ENCODE measurements at regions of chr10 and their contacts with region 1.

Region 1: DNA sequence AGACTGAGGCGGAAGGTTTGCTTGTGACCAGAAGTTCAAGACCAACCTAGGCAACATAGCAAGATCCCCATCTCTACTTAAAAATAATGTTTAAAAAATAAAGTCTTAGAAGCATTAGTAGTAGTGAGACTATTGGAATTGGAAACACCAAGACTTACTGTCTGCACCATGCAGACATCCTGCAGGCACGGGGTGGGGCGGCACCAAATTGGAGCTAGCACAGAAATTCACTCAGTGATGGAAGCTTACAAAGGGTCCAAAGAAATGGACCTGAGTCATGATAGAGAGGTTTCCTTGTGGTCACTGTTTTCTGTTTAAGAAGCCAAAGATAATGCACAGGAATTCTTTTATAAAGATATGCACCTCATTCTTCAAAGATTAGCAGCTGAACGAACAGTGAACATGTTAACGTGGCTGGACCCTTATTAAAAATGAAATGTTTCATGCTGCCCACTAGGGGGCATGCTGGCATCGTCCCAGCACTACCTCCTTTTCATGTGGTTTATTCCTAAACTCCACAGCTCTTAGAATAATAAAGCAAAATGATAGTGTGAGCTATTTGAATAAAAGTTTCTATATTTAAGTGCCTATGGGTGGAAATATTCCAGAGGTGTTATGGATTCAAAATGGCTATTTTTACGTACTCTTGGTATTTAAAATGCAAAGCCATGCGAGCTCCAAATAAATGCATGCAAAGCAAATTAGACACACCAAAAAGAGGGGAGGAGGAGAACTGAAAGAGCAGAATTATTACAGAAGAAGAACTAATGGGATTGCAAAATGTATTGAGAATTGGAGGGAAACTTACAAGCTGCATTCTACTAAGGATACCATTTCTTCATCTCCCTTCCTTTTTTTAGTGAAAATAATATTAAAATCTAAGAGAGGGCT is 28.6 kb downstream of the PDSS1 start:
- DNase-seq: peak; percentile 70 to 82 (median 75)
- H3K4me3 ChIP-seq: no peak overlapping the region
- H3K27ac ChIP-seq: no peak overlapping the region
- H3K4me1 ChIP-seq: no peaks in the 10 kb centered on the region
- H3K27me3 ChIP-seq: no peaks in the 10 kb centered on the region

Region 2: GRCh38 chr10:26642896-26643653 is 83.0 kb before region 1 on chr10:
- CTCF ChIA-PET with region 1: no interaction called
- POLR2A ChIA-PET with region 1: no interaction called
- DNase-seq: peak in 1 of 3 donors; percentile 11
- H3K4me3 ChIP-seq: no peak overlapping the region
- H3K27ac ChIP-seq: no peak overlapping the region
- H3K4me1 ChIP-seq: peaks cover 0 to 3% (median 0%) of the 10 kb centered on the region in 4 experiments
- H3K27me3 ChIP-seq: no peaks in the 10 kb centered on the region

Region 3: DNA sequence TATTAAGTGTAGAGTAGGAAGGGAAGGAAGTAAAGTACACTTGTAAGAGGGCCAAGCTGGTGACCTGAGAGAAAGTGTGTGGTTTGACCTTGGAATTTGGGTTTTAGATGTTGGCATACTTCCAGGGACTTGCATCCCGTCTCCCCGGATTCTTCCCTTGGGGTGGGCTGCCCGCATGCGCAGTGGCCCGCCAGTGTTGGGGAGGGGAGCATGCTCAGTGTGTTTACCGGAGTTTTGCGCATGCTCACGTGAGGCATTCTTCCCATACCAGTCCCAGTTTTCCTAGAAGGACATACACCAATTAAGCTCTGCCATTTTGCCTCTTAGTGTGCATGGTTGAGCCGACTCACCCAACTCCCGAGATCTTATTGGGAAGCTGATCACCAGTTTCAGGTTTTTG is 19.1 kb before region 1 on chr10:
- CTCF ChIA-PET with region 1: interaction called, 10 read pairs
- POLR2A ChIA-PET with region 1: no interaction called
- DNase-seq: no peak
- H3K4me3 ChIP-seq: no peak overlapping the region
- H3K27ac ChIP-seq: no peak overlapping the region
- H3K4me1 ChIP-seq: peaks cover 0 to 3% (median 0%) of the 10 kb centered on the region in 4 experiments
- H3K27me3 ChIP-seq: no peaks in the 10 kb centered on the region

Region 4: GRCh38 chr10:26860443-26861204 is 134.5 kb after region 1 on chr10 and contains the start of gene ABI1:
- CTCF ChIA-PET with region 1: interaction called, 10 read pairs
- POLR2A ChIA-PET with region 1: no interaction called
- DNase-seq: peak; percentile 99 to 100 (median 99)
- H3K4me3 ChIP-seq: peak within 1 kb of the TSS; percentile 94 to 100 (median 97)
- H3K27ac ChIP-seq: peak within 1 kb of the TSS; percentile 89 to 96
- H3K4me1 ChIP-seq: peaks cover 17 to 34% (median 24%) of the 10 kb centered on the region in 4 experiments
- H3K27me3 ChIP-seq: no peaks in the 10 kb centered on the region

Region 5: GRCh38 chr10:26869528-26869927 is 143.4 kb after region 1 on chr10:
- CTCF ChIA-PET with region 1: interaction called, 189 read pairs
- POLR2A ChIA-PET with region 1: interaction called, 3 read pairs
- DNase-seq: peak in 2 of 3 donors; percentile 42 to 44
- H3K4me3 ChIP-seq: no peak overlapping the region
- H3K27ac ChIP-seq: no peak overlapping the region
- H3K4me1 ChIP-seq: peaks cover 0 to 12% (median 1%) of the 10 kb centered on the region in 4 experiments
- H3K27me3 ChIP-seq: no peaks in the 10 kb centered on the region

Region 6: DNA sequence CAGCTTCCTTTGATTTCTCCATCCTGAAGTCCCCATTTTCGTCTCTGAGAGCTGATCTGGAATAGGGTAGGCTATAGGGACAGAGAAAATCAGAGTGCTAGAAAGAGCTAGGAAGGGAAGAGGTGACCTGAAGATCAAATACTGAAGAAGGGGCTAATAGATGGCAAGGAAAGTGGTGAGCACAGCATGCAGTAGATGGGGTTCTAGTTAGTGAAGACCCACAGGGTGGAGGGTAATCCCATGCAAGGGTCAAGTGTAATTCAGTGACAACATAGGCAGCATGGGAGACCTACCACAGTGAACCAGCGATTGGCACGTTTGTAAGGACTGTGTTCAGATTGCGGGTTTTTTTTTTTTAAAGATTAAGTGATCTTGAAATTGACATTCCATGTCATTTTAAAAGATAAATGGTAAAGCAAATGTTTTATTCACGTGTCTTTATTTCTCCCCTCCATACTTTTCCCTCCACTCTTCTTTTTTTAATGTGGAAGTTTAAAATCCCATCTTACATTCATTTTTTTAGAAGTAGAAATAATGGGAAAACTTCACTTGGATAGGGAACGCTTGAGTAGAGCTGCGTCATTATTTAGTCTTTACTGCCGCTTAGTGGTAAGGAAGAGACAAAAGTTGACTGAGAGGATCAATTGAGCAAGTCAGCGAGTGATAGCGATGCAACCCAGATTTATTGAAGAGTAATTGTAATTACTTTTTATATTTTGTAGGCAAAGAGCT is 155.7 kb after region 1 on chr10:
- CTCF ChIA-PET with region 1: interaction called, 189 read pairs
- POLR2A ChIA-PET with region 1: interaction called, 4 read pairs
- DNase-seq: peak; percentile 32 to 70 (median 70)
- H3K4me3 ChIP-seq: no peak overlapping the region
- H3K27ac ChIP-seq: no peak overlapping the region
- H3K4me1 ChIP-seq: no peaks in the 10 kb centered on the region
- H3K27me3 ChIP-seq: peaks cover 0 to 13% (median 0%) of the 10 kb centered on the region in 5 experiments

Region 7: GRCh38 chr10:26887611-26888188 is 161.6 kb after region 1 on chr10:
- CTCF ChIA-PET with region 1: interaction called, 189 read pairs
- POLR2A ChIA-PET with region 1: no interaction called
- DNase-seq: no peak
- H3K4me3 ChIP-seq: no peak overlapping the region
- H3K27ac ChIP-seq: no peak overlapping the region
- H3K4me1 ChIP-seq: no peaks in the 10 kb centered on the region
- H3K27me3 ChIP-seq: peaks cover 0 to 7% (median 0%) of the 10 kb centered on the region in 5 experiments

Region 8: GRCh38 chr10:26950934-26951333 is 224.9 kb after region 1 on chr10:
- CTCF ChIA-PET with region 1: no interaction called
- POLR2A ChIA-PET with region 1: no interaction called
- DNase-seq: peak in 2 of 3 donors; percentile 16 to 35
- H3K4me3 ChIP-seq: no peak overlapping the region
- H3K27ac ChIP-seq: no peak overlapping the region
- H3K4me1 ChIP-seq: no peaks in the 10 kb centered on the region
- H3K27me3 ChIP-seq: peaks cover 0 to 15% (median 0%) of the 10 kb centered on the region in 5 experiments

Measured in common myeloid progenitor, CD34-positive (primary cell).